GM12878 (cell line): ENCODE measurements at regions of chr1 and their contacts with region 1.

Region 1: GRCh38 chr1:207997486-207998268 is 86.8 kb upstream of the CD34 start:
- DNase-seq: no peak
- ATAC-seq: peak; percentile 99
- H3K4me3 ChIP-seq: no peak overlapping the region
- H3K27ac ChIP-seq: no peak overlapping the region
- H3K4me1 ChIP-seq: no peaks in the 10 kb centered on the region
- H3K27me3 ChIP-seq: peaks cover 2 to 3% of the 10 kb centered on the region in 2 experiments; a peak in 2 of 4 replicates
- CTCF ChIP-seq: peak; percentile 63 to 89 (median 82)
- EP300 ChIP-seq: no peak
- POLR2A ChIP-seq: no peak
- RAD21 ChIP-seq: peak; percentile 26

Region 2: DNA sequence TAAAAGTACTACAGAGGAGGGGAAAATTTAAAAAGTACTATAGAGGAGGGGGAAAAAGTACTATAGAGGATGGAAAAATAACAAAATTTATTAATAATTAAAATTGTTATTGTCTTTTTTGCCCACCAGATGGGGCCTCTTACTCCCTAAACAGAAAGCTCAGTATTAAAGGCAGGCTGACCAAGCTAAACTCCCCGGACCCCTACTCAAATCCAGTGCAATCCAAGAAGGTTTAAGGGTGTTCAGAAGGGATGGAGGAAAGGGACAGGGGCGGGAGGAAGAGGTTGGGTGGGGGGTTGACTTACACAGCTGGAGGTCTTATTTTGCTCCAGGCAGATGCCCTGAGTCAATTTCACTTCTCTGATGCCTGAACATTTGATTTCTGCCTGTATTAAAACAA is 100.5 kb before region 1 on chr1:
- CTCF ChIA-PET with region 1: interaction called, 15 read pairs
- POLR2A ChIA-PET with region 1: no interaction called
- RAD21 ChIA-PET with region 1: interaction called, 7 read pairs
- SMC1A ChIA-PET with region 1: interaction called, 7 read pairs
- in situ Hi-C with region 1: no loop called
- intact Hi-C with region 1: no loop called
- DNase-seq: no peak
- ATAC-seq: peak; percentile 43
- H3K4me3 ChIP-seq: no peak overlapping the region
- H3K27ac ChIP-seq: no peak overlapping the region
- H3K4me1 ChIP-seq: no peaks in the 10 kb centered on the region; the same call in 1 of the 2 replicates
- H3K27me3 ChIP-seq: peaks cover 0 to 2% of the 10 kb centered on the region in 2 experiments; a peak in 1 of 4 replicates
- CTCF ChIP-seq: peak in 2 of 3 experiments; percentile 29 to 39; a peak in 4 of 6 replicates
- EP300 ChIP-seq: no peak
- POLR2A ChIP-seq: no peak
- RAD21 ChIP-seq: peak; percentile 53